ENCODE measurements at regions of chr21 and their contacts with region 1.

Region 1: GRCh38 chr21:33441489-33442477 is 38.0 kb downstream of the TMEM50B start:
- DNase-seq: peak; percentile 61
- ATAC-seq: peak; percentile 92
- H3K4me3 Mint-ChIP-seq: peak overlapping the region; percentile 58
- H3K27ac Mint-ChIP-seq: peak overlapping the region; percentile 92
- H3K4me1 Mint-ChIP-seq: peaks cover 73% of the 10 kb centered on the region
- H3K27me3 Mint-ChIP-seq: no peaks in the 10 kb centered on the region
- CTCF ChIP-seq: no peak

Region 2: DNA sequence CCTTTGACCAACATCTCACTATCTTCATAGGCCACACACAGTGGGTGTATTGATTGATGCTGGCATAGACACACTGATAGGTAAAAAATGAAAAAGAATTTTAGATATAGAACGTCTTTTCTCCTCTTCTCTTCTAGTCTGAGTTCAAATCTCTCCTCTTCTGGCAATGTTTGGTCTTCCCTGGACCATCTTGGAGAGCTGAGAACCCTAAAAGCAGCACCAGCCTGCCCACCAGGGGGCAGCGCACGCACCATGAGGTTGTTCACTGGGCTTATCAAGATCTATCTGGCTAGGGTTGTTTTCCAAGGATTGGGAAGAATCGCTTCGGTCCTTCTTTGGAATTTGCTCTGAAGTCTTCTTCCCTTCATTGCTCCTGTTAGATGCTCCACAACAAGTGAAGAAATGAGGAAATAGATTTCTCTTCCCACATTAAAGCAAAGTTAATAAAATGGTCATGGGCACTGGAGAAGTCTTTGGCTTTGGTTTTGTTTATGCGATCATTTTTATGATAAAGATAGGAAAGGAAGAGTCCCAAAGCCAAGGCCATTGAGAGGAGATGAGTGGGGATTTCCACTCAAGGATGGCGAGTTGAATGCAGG is 520.1 kb before region 1 on chr21:
- CTCF ChIA-PET with region 1: interaction called, 4 read pairs
- POLR2A ChIA-PET with region 1: no interaction called
- intact Hi-C with region 1: loop called (anchors 2 kb)
- DNase-seq: peak; percentile 26
- ATAC-seq: peak; percentile 40
- H3K4me3 Mint-ChIP-seq: no peak overlapping the region
- H3K27ac Mint-ChIP-seq: no peak overlapping the region
- H3K4me1 Mint-ChIP-seq: no peaks in the 10 kb centered on the region
- H3K27me3 Mint-ChIP-seq: peaks cover 20% of the 10 kb centered on the region
- CTCF ChIP-seq: peak; percentile 44

Region 3: GRCh38 chr21:32994305-32994704 is 447.5 kb before region 1 on chr21:
- CTCF ChIA-PET with region 1: no interaction called
- POLR2A ChIA-PET with region 1: no interaction called
- intact Hi-C with region 1: loop called (anchors 1 kb)
- DNase-seq: no peak
- ATAC-seq: no peak
- H3K4me3 Mint-ChIP-seq: no peak overlapping the region
- H3K27ac Mint-ChIP-seq: no peak overlapping the region
- H3K4me1 Mint-ChIP-seq: no peaks in the 10 kb centered on the region
- H3K27me3 Mint-ChIP-seq: peaks cover 44% of the 10 kb centered on the region
- CTCF ChIP-seq: no peak

Region 4: GRCh38 chr21:33324291-33325221 is 117.2 kb before region 1 on chr21 and contains the start of gene IFNAR1:
- CTCF ChIA-PET with region 1: interaction called, 15 read pairs
- POLR2A ChIA-PET with region 1: interaction called, 20 read pairs
- intact Hi-C with region 1: loop called (anchors 1 kb)
- DNase-seq: peak; percentile 97
- ATAC-seq: peak; percentile 80
- H3K4me3 Mint-ChIP-seq: no peak within 1 kb of the TSS
- H3K27ac Mint-ChIP-seq: no peak within 1 kb of the TSS
- H3K4me1 Mint-ChIP-seq: peaks cover 32% of the 10 kb centered on the region
- H3K27me3 Mint-ChIP-seq: no peaks in the 10 kb centered on the region
- CTCF ChIP-seq: no peak
- total RNA-seq, gene IFNAR1: 33.9 and 34.5 TPM in 2 replicates

Region 5: GRCh38 chr21:33374450-33375096 is 67.2 kb before region 1 on chr21:
- CTCF ChIA-PET with region 1: interaction called, 6 read pairs
- POLR2A ChIA-PET with region 1: interaction called, 3 read pairs
- intact Hi-C with region 1: loop called (anchors 1 kb)
- DNase-seq: no peak
- ATAC-seq: peak; percentile 72
- H3K4me3 Mint-ChIP-seq: peak overlapping the region; percentile 59
- H3K27ac Mint-ChIP-seq: peak overlapping the region; percentile 87
- H3K4me1 Mint-ChIP-seq: peaks cover 79% of the 10 kb centered on the region
- H3K27me3 Mint-ChIP-seq: no peaks in the 10 kb centered on the region
- CTCF ChIP-seq: no peak

Region 6: GRCh38 chr21:33403779-33404585 is 37.8 kb before region 1 on chr21:
- CTCF ChIA-PET with region 1: interaction called, 4 read pairs
- POLR2A ChIA-PET with region 1: interaction called, 19 read pairs
- intact Hi-C with region 1: loop called (anchors 2 kb)
- DNase-seq: peak; percentile 39
- ATAC-seq: peak; percentile 43
- H3K4me3 Mint-ChIP-seq: peak overlapping the region; percentile 95
- H3K27ac Mint-ChIP-seq: peak overlapping the region; percentile 94
- H3K4me1 Mint-ChIP-seq: peaks cover 80% of the 10 kb centered on the region
- H3K27me3 Mint-ChIP-seq: no peaks in the 10 kb centered on the region
- CTCF ChIP-seq: no peak

Region 7: GRCh38 chr21:33561373-33561772 is 119.6 kb after region 1 on chr21:
- CTCF ChIA-PET with region 1: no interaction called
- POLR2A ChIA-PET with region 1: no interaction called
- intact Hi-C with region 1: no loop called
- DNase-seq: no peak
- ATAC-seq: no peak
- H3K4me3 Mint-ChIP-seq: no peak overlapping the region
- H3K27ac Mint-ChIP-seq: peak overlapping the region; percentile 47
- H3K4me1 Mint-ChIP-seq: peaks cover 10% of the 10 kb centered on the region
- H3K27me3 Mint-ChIP-seq: no peaks in the 10 kb centered on the region
- CTCF ChIP-seq: no peak

Region 8: GRCh38 chr21:33801424-33802420 is 359.9 kb after region 1 on chr21:
- CTCF ChIA-PET with region 1: no interaction called
- POLR2A ChIA-PET with region 1: no interaction called
- intact Hi-C with region 1: no loop called
- DNase-seq: no peak
- ATAC-seq: no peak
- H3K4me3 Mint-ChIP-seq: no peak overlapping the region
- H3K27ac Mint-ChIP-seq: no peak overlapping the region
- H3K4me1 Mint-ChIP-seq: no peaks in the 10 kb centered on the region
- H3K27me3 Mint-ChIP-seq: no peaks in the 10 kb centered on the region
- CTCF ChIP-seq: no peak

Measured in activated B cell treated with CpG ODN at 0.5 μM for 24 hours (primary cell).